Posterior vena cava (tissue), 2 donors: ENCODE measurements at regions of chr11 and their contacts with region 1.

Region 1: GRCh38 chr11:64894070-64894796 is 15.8 kb upstream of the EHD1 start:
- DNase-seq: peak; percentile 95

Region 2: DNA sequence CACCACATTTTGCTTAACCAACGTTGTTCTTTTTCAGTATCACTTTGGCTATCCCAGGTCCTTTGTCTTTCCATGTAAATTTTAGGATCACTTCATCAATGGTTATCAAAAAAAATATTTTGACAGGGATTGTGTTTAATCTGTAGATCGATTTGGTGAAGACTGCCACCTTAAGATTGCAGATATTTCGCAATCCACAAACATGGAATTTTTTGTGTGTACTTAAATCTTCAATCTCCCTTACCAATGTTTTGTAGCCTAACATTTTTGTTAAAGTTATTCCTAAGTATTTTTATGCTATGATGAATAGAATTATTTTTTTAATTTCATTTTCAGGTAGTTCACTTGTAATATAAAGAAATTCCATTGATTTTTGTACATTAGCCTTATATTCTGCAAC is 1421.8 kb before region 1 on chr11:
- intact Hi-C with region 1: no loop called
- DNase-seq: no peak

Region 3: GRCh38 chr11:64803163-64803845 is 90.9 kb before region 1 on chr11 and contains the start of gene MAP4K2:
- intact Hi-C with region 1: no loop called
- DNase-seq: peak; percentile 95
- total RNA-seq, gene MAP4K2: 13.2 to 14.7 TPM

Region 4: GRCh38 chr11:64846998-64847666 is 47.1 kb before region 1 on chr11:
- intact Hi-C with region 1: loop called (anchors 2 to 5 kb)
- DNase-seq: peak; percentile 98

Region 5: DNA sequence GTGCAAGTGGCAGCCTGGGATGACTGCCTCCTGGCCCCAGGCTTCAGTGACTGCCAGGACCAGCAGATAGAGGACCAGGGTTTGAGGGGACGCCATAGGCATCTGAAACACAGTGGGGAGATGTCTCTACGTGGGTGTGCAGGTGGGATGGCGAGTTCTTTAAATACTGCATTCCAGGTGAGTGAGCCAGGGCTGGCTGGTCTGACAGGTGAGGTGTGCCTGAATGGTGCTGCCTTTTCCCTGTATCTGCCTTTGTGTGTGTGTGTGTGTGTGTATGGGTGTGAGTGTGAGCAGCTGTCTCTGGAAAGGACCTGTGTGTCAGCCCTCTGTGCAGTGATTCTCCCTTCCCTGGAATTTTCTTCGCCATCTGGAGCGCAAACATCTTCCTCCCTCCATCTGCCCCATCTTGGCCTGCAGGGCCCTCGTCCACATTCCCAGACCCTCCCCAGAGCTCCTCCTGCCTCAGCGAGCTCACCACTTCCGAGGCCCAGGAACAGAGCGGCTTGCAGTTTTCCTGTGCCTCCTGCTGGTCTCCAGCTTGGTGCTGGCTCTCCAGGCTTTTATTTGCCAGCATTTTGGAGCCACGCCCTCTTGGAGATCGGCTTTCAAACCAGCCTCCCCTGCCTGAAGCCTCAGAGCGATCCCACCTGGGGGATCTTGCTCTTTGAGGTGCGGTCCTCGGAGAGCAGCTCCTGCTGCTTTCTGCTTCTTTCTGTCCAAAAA is 41.3 kb after region 1 on chr11 and contains the start of gene GPHA2:
- intact Hi-C with region 1: no loop called
- DNase-seq: peak; percentile 43
- total RNA-seq, gene GPHA2: not detected